ENCODE measurements at regions of chrX and their contacts with region 1.

Region 1: DNA sequence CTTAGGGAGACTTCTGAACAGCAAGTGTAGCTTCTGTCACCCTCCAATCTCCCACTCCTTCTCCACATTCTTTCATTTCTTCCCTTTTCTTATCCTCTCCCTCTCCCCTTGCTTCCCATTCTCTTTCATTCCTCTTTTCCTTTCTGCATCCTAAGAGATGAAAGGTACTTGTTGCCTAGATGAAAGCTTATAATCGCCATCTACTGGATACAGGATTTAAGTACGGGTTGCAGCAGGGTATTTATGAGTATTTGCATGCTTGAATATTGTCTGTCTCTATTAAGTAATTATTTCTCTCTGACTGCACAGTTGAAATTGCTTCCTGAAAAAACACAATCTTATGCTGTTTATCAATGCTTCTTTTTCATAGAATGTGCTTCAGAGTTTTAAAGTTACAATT is 174.0 kb upstream of the TENT5D start:
- DNase-seq: no peak
- H3K4me3 ChIP-seq: no peak overlapping the region
- H3K4me3 Mint-ChIP-seq: no peak overlapping the region
- H3K27ac ChIP-seq: no peak overlapping the region
- H3K27ac Mint-ChIP-seq: no peak overlapping the region
- H3K4me1 ChIP-seq: no peaks in the 10 kb centered on the region
- H3K4me1 Mint-ChIP-seq: no peaks in the 10 kb centered on the region
- H3K27me3 ChIP-seq: no peaks in the 10 kb centered on the region
- H3K27me3 Mint-ChIP-seq: peaks cover 0 to 8% (median 0%) of the 10 kb centered on the region in 3 donors
- CTCF ChIP-seq: no peak

Region 2: GRCh38 chrX:80181079-80181478 is 65.2 kb before region 1 on chrX:
- intact Hi-C with region 1: no loop called
- DNase-seq: no peak
- H3K4me3 ChIP-seq: no peak overlapping the region
- H3K4me3 Mint-ChIP-seq: no peak overlapping the region
- H3K27ac ChIP-seq: no peak overlapping the region
- H3K27ac Mint-ChIP-seq: no peak overlapping the region
- H3K4me1 ChIP-seq: no peaks in the 10 kb centered on the region
- H3K4me1 Mint-ChIP-seq: no peaks in the 10 kb centered on the region
- H3K27me3 ChIP-seq: no peaks in the 10 kb centered on the region
- H3K27me3 Mint-ChIP-seq: peaks cover 0 to 3% (median 2%) of the 10 kb centered on the region in 3 donors
- CTCF ChIP-seq: no peak

Region 3: GRCh38 chrX:80306007-80306406 is 59.7 kb after region 1 on chrX:
- intact Hi-C with region 1: loop called in 1 of 2 experiments (anchors 10 kb)
- DNase-seq: no peak
- H3K4me3 ChIP-seq: no peak overlapping the region
- H3K4me3 Mint-ChIP-seq: no peak overlapping the region
- H3K27ac ChIP-seq: no peak overlapping the region
- H3K27ac Mint-ChIP-seq: no peak overlapping the region
- H3K4me1 ChIP-seq: no peaks in the 10 kb centered on the region
- H3K4me1 Mint-ChIP-seq: no peaks in the 10 kb centered on the region
- H3K27me3 ChIP-seq: no peaks in the 10 kb centered on the region
- H3K27me3 Mint-ChIP-seq: no peaks in the 10 kb centered on the region
- CTCF ChIP-seq: no peak